Activated CD4-positive, alpha-beta T cell treated with anti-CD3 and anti-CD28 coated beads for 36 hours (primary cell): ENCODE measurements at regions of chr6 and their contacts with region 1.

Region 1: GRCh38 chr6:111804627-111805235 is 68.5 kb downstream of the FYN start:
- DNase-seq: peak; percentile 83
- ATAC-seq: peak; percentile 62
- H3K4me3 Mint-ChIP-seq: peak overlapping the region; percentile 60
- H3K27ac Mint-ChIP-seq: peak overlapping the region; percentile 98
- H3K4me1 Mint-ChIP-seq: peaks cover 98% of the 10 kb centered on the region
- H3K27me3 Mint-ChIP-seq: no peaks in the 10 kb centered on the region

Region 2: DNA sequence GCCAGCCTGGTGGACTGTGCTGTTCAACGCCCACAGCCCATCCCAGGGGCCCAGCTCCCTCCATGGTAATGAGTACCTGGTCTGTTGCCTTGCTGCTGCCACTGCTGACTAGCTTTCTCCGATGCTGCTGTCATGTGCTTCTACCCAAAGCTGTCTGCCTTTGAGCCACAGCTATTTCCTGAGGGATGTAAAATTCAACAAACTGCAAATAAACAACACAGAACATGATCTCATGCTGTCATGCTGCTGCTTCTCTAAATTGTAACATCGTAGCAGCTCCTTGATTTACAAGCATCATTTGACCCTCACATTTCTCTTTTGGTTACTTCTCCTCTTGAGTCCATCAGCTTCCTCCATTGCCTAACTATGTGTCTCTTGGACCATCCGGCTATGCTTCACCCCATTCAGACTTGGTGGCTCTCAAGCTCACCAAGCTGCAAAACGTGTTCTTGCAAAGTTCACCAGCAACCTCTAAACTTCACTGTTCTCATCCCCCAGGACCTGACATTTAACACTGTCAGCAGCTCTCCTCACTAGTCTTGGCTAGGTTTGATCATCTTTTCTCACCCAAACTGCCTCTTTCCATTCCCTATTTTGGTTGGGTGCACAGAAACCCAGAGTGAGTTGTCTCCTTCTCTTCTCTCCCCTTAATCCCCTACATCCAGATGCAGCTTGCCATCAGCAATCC is 14.0 kb after region 1 on chr6:
- CTCF ChIA-PET with region 1: interaction called, 44 read pairs
- POLR2A ChIA-PET with region 1: interaction called, 34 read pairs
- intact Hi-C with region 1: no loop called
- DNase-seq: no peak
- ATAC-seq: peak; percentile 55
- H3K4me3 Mint-ChIP-seq: peak overlapping the region; percentile 9
- H3K27ac Mint-ChIP-seq: peak overlapping the region; percentile 90
- H3K4me1 Mint-ChIP-seq: peaks cover 76% of the 10 kb centered on the region
- H3K27me3 Mint-ChIP-seq: no peaks in the 10 kb centered on the region

Region 3: DNA sequence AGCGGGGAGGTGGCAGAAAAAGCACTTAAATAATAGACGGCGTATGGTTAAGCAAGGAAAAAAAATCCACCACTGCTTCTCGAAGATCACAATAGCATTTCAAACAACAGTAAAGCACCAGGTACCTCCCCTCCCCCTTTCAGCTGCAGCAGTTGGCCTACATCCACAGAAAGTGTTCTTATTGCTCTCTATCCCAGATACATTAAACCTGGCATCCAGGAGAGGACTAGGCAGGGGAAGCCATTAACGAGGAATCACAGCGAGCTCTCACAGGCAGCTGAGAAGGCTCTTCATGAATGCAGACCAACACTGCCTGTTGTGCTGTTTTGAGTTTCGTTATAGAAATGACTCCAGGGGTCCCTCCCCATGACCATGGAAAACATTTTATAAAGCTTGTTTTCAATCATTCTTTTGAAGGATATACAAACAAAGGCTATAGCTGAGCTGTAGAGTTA is 56.7 kb after region 1 on chr6:
- CTCF ChIA-PET with region 1: interaction called, 11 read pairs
- POLR2A ChIA-PET with region 1: interaction called, 4 read pairs
- intact Hi-C with region 1: no loop called
- DNase-seq: peak; percentile 48
- ATAC-seq: peak; percentile 40
- H3K4me3 Mint-ChIP-seq: peak overlapping the region; percentile 20
- H3K27ac Mint-ChIP-seq: peak overlapping the region; percentile 91
- H3K4me1 Mint-ChIP-seq: peaks cover 100% of the 10 kb centered on the region
- H3K27me3 Mint-ChIP-seq: no peaks in the 10 kb centered on the region

Region 4: GRCh38 chr6:111973118-111973761 is 168.5 kb after region 1 on chr6:
- CTCF ChIA-PET with region 1: interaction called, 4 read pairs
- POLR2A ChIA-PET with region 1: interaction called, 4 read pairs
- intact Hi-C with region 1: loop called (anchors 1 to 2 kb)
- DNase-seq: peak; percentile 80
- ATAC-seq: peak; percentile 84
- H3K4me3 Mint-ChIP-seq: peak overlapping the region; percentile 65
- H3K27ac Mint-ChIP-seq: peak overlapping the region; percentile 90
- H3K4me1 Mint-ChIP-seq: peaks cover 73% of the 10 kb centered on the region
- H3K27me3 Mint-ChIP-seq: no peaks in the 10 kb centered on the region

Region 5: GRCh38 chr6:112018619-112019416 is 214.1 kb after region 1 on chr6:
- CTCF ChIA-PET with region 1: interaction called, 3 read pairs
- POLR2A ChIA-PET with region 1: no interaction called
- intact Hi-C with region 1: loop called in 1 of 2 experiments (anchors 2 kb)
- DNase-seq: no peak
- ATAC-seq: no peak
- H3K4me3 Mint-ChIP-seq: no peak overlapping the region
- H3K27ac Mint-ChIP-seq: peak overlapping the region; percentile 43
- H3K4me1 Mint-ChIP-seq: peaks cover 78% of the 10 kb centered on the region
- H3K27me3 Mint-ChIP-seq: no peaks in the 10 kb centered on the region